Activated naive CD8-positive, alpha-beta T cell treated with anti-CD3 and anti-CD28 coated beads, Interleukin-2, amount 10 ng/mL, durations not matched to agents 7 days and 5 days (primary cell): ENCODE measurements at regions of chr11 and their contacts with region 1.

Region 1: GRCh38 chr11:62652161-62653006 is 718 bp downstream of the INTS5 start:
- DNase-seq: no peak
- ATAC-seq: no peak
- H3K4me3 Mint-ChIP-seq: peak overlapping the region; percentile 94
- H3K27ac Mint-ChIP-seq: peak overlapping the region; percentile 91
- H3K4me1 Mint-ChIP-seq: peaks cover 17% of the 10 kb centered on the region
- H3K27me3 Mint-ChIP-seq: no peaks in the 10 kb centered on the region

Region 2: DNA sequence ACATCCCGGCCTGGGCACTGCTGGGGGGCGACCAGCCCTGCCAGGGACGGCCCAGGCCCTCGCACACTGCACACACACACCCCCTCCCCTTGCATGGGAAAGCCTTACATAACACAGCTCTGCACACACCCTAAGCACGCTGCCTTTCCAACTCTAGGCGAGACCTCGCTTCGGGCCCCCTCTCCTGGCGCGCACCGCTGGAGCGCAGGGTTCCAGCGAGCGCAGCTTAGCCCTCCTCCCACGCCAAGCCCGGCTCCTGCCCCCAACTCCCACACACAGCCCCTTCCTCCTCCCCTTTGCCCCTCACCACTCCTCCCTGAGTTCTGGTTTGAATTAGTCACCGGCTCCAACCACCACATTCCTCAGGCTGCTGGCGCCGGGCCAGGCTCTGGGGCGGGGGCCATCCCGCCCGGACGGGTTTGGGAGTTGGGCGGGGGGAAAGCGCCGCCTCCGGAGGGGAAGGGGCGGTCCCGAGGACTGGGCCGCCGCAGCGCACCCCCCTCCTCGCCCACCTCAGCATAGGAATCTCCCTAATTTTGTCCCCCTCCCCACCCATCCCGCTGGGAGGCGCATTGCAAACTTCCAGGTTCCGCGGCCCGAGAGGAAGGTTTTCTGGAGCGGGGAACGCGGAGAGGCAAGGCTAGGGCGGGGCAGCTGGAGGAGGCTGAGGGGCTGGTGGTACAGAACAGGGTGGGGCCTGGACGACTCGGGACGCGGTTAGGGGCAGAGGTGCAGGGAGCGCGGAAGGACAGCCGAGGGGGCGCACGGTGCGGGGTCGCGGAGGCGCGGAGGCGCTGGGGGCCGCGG is 106.7 kb before region 1 on chr11:
- POLR2A ChIA-PET with region 1: no interaction called
- DNase-seq: peak; percentile 65
- ATAC-seq: peak; percentile 25
- H3K4me3 Mint-ChIP-seq: peak overlapping the region; percentile 96
- H3K27ac Mint-ChIP-seq: peak overlapping the region; percentile 78
- H3K4me1 Mint-ChIP-seq: peaks cover 47% of the 10 kb centered on the region
- H3K27me3 Mint-ChIP-seq: peaks cover 36% of the 10 kb centered on the region

Region 3: GRCh38 chr11:62580959-62581715 is 71.2 kb before region 1 on chr11:
- POLR2A ChIA-PET with region 1: no interaction called
- DNase-seq: no peak
- ATAC-seq: no peak
- H3K4me3 Mint-ChIP-seq: no peak overlapping the region
- H3K27ac Mint-ChIP-seq: peak overlapping the region; percentile 49
- H3K4me1 Mint-ChIP-seq: peaks cover 4% of the 10 kb centered on the region
- H3K27me3 Mint-ChIP-seq: no peaks in the 10 kb centered on the region

Region 4: GRCh38 chr11:62621567-62622470 is 30.6 kb before region 1 on chr11 and contains the start of gene B3GAT3:
- POLR2A ChIA-PET with region 1: interaction called, 40 read pairs
- DNase-seq: peak; percentile 94
- ATAC-seq: peak; percentile 87
- H3K4me3 Mint-ChIP-seq: peak within 1 kb of the TSS; percentile 93
- H3K27ac Mint-ChIP-seq: peak within 1 kb of the TSS; percentile 99
- H3K4me1 Mint-ChIP-seq: peaks cover 24% of the 10 kb centered on the region
- H3K27me3 Mint-ChIP-seq: no peaks in the 10 kb centered on the region
- total RNA-seq, gene B3GAT3: 76.1 to 87.0 TPM